SK-N-SH (cell line): ENCODE measurements at regions of chr7 and their contacts with region 1.

Region 1: DNA sequence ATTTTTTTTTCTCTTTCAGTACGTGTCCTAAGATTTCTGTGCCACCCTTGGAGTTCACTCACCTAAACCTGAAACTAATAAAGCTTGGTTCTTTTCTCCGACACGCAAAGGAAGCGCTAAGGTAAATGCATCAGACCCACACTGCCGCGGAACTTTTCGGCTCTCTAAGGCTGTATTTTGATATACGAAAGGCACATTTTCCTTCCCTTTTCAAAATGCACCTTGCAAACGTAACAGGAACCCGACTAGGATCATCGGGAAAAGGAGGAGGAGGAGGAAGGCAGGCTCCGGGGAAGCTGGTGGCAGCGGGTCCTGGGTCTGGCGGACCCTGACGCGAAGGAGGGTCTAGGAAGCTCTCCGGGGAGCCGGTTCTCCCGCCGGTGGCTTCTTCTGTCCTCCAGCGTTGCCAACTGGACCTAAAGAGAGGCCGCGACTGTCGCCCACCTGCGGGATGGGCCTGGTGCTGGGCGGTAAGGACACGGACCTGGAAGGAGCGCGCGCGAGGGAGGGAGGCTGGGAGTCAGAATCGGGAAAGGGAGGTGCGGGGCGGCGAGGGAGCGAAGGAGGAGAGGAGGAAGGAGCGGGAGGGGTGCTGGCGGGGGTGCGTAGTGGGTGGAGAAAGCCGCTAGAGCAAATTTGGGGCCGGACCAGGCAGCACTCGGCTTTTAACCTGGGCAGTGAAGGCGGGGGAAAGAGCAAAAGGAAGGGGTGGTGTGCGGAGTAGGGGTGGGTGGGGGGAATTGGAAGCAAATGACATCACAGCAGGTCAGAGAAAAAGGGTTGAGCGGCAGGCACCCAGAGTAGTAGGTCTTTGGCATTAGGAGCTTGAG is at the start of gene CFTR:
- DNase-seq: peak; percentile 12
- H3K4me3 ChIP-seq: no peak within 1 kb of the TSS
- H3K27ac ChIP-seq: no peak within 1 kb of the TSS
- H3K4me1 ChIP-seq: no peaks in the 10 kb centered on the region
- H3K27me3 ChIP-seq: peaks cover 18% of the 10 kb centered on the region
- CTCF ChIP-seq: no peak
- EP300 ChIP-seq: no peak
- RAD21 ChIP-seq: no peak
- polyA plus RNA-seq, gene CFTR: not detected in 2 replicates

Region 2: DNA sequence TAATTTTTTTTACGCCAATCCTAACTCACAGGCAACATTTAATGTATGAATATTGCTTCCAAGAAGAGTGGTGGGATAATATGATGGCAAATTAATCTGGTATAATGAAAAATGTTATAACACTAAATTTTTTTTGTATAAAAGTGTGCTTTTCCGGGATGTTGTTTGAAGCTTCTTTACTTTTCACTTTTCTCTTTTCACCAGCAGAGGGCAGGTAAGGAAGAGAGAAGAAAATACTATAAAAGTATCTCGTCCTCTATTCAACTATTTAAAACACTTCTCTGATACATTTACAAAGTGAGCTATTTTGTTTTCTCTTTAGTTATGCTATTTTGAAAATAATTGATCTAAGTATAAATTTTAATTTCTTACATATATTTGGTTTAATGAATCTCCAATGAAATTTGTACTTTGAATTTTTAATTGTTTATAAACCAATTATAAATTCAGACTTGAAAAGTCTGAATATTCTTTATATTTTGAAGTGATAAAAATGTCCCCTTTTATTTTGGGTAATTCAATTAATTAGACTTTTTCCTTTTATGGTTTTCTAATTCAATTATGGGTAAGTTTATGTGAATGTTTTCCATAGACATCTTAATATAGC is 20.4 kb before region 1 on chr7:
- CTCF ChIA-PET with region 1: interaction called, 11 read pairs
- POLR2A ChIA-PET with region 1: no interaction called
- DNase-seq: peak; percentile 21
- H3K4me3 ChIP-seq: peak overlapping the region in 1 of 2 experiments; percentile 9; a peak in 1 of 4 replicates
- H3K27ac ChIP-seq: no peak overlapping the region
- H3K4me1 ChIP-seq: no peaks in the 10 kb centered on the region
- H3K27me3 ChIP-seq: no peaks in the 10 kb centered on the region
- CTCF ChIP-seq: peak; percentile 90
- EP300 ChIP-seq: no peak
- RAD21 ChIP-seq: peak; percentile 59